ENCODE measurements at regions of chr1 and their contacts with region 1.

Region 1: GRCh38 chr1:46197964-46198811 is at the start of gene POMGNT1:
- DNase-seq: peak; percentile 87
- ATAC-seq: peak; percentile 94
- H3K4me3 Mint-ChIP-seq: peak within 1 kb of the TSS; percentile 84
- H3K27ac Mint-ChIP-seq: peak within 1 kb of the TSS; percentile 82
- H3K4me1 Mint-ChIP-seq: peaks cover 19% of the 10 kb centered on the region
- H3K27me3 Mint-ChIP-seq: peaks cover 2% of the 10 kb centered on the region
- total RNA-seq, gene POMGNT1: 36.4 to 36.5 TPM

Region 2: GRCh38 chr1:46118856-46119255 is 79.3 kb before region 1 on chr1:
- CTCF ChIA-PET with region 1: no interaction called
- POLR2A ChIA-PET with region 1: no interaction called
- intact Hi-C with region 1: no loop called
- DNase-seq: no peak
- ATAC-seq: no peak
- H3K4me3 Mint-ChIP-seq: no peak overlapping the region
- H3K27ac Mint-ChIP-seq: no peak overlapping the region
- H3K4me1 Mint-ChIP-seq: peaks cover 2% of the 10 kb centered on the region
- H3K27me3 Mint-ChIP-seq: peaks cover 2% of the 10 kb centered on the region

Region 3: GRCh38 chr1:46184920-46185658 is 13.1 kb before region 1 on chr1:
- CTCF ChIA-PET with region 1: interaction called, 4 read pairs
- POLR2A ChIA-PET with region 1: no interaction called
- intact Hi-C with region 1: loop called in 1 of 2 experiments (anchors 1 kb)
- DNase-seq: peak; percentile 86
- ATAC-seq: peak; percentile 89
- H3K4me3 Mint-ChIP-seq: peak overlapping the region; percentile 67
- H3K27ac Mint-ChIP-seq: peak overlapping the region; percentile 97
- H3K4me1 Mint-ChIP-seq: peaks cover 24% of the 10 kb centered on the region
- H3K27me3 Mint-ChIP-seq: no peaks in the 10 kb centered on the region

Region 4: DNA sequence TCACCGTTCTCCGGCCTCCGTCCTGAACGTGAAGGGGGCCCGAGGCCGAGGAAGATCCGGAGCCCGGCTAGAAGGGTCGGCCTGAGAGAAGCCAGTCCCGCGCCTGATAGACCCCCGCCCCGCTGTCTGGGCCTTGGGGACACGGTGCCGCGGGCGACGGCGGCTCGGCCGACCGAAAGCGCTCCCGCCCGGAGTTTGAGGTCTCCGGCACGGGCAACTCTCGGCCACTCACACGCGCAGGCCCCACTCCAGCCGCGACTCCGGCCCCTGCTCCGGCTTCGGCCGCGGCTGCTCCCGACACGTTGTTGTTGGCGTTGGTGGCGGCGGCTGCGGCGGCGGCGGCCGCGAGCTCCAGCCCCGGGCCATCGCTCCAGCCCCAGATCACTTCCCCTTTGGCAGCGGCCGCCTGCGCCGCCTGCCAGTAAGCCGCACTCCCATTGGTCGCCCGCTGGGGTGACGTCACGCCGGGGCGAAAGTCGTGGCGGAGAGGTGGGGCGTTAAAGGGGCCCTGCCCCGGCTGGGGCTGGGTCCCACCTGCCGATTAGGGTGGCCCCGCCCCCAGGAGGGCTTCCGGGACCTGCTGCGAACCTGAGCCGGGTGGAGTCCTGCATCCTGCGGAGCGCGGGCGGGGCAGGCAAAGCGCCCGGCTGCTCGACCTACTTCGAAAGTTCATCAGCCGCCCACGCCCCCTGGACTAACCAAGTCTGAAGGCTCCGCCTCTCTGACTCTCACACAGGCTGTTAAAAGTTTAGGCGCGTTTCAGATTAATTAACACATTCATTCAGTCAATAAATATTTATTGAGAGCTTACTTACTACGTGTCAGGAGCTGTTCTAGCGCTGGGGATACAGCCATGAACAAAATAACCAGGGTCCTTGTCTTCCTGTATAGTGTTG is 520.8 kb after region 1 on chr1 and contains the start of gene EFCAB14:
- CTCF ChIA-PET with region 1: no interaction called
- POLR2A ChIA-PET with region 1: no interaction called
- intact Hi-C with region 1: no loop called
- DNase-seq: peak; percentile 99
- ATAC-seq: peak; percentile 99
- H3K4me3 Mint-ChIP-seq: peak within 1 kb of the TSS; percentile 90
- H3K27ac Mint-ChIP-seq: peak within 1 kb of the TSS; percentile 87
- H3K4me1 Mint-ChIP-seq: peaks cover 35% of the 10 kb centered on the region
- H3K27me3 Mint-ChIP-seq: no peaks in the 10 kb centered on the region
- total RNA-seq, gene EFCAB14: 37.8 to 54.3 TPM